ENCODE measurements at regions of chr13 and their contacts with region 1.

Region 1: DNA sequence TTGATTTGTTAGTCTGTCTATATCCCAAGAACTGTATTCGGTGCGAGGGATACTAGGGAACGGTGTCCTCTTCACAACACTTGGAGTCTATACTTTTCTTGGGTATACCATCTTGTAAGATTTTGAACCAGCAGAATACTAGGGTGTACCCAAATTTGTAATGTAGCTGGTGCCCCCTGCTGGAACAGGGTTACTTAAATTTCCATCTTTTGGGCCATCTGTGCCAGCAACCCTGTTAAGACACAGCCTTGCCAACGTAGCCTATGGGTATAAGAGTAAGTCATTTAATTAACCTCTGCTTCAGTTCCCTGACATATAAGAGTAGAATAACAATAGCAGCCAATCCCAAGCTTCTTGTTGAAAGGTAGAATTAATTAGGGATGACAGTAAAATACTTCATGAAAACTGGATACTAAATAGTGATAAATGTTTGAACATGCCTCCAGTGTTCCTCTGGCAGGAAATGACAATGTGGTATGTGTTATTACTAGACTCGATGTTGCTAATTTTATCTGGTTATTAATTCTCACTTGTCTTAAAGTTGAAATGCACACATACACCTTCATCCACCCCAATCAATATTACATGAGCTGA is 607.6 kb downstream of the FGF9 start:
- DNase-seq: peak; percentile 12 to 78 (median 64)
- ATAC-seq: peak in 2 of 4 experiments; percentile 69 to 76
- H3K4me3 ChIP-seq: no peak overlapping the region
- H3K4me3 Mint-ChIP-seq: no peak overlapping the region
- H3K27ac ChIP-seq: no peak overlapping the region
- H3K27ac Mint-ChIP-seq: no peak overlapping the region
- H3K4me1 ChIP-seq: no peaks in the 10 kb centered on the region
- H3K4me1 Mint-ChIP-seq: peaks cover 18 to 21% (median 19%) of the 10 kb centered on the region in 3 donors
- H3K27me3 ChIP-seq: no peaks in the 10 kb centered on the region
- H3K27me3 Mint-ChIP-seq: no peaks in the 10 kb centered on the region

Region 2: DNA sequence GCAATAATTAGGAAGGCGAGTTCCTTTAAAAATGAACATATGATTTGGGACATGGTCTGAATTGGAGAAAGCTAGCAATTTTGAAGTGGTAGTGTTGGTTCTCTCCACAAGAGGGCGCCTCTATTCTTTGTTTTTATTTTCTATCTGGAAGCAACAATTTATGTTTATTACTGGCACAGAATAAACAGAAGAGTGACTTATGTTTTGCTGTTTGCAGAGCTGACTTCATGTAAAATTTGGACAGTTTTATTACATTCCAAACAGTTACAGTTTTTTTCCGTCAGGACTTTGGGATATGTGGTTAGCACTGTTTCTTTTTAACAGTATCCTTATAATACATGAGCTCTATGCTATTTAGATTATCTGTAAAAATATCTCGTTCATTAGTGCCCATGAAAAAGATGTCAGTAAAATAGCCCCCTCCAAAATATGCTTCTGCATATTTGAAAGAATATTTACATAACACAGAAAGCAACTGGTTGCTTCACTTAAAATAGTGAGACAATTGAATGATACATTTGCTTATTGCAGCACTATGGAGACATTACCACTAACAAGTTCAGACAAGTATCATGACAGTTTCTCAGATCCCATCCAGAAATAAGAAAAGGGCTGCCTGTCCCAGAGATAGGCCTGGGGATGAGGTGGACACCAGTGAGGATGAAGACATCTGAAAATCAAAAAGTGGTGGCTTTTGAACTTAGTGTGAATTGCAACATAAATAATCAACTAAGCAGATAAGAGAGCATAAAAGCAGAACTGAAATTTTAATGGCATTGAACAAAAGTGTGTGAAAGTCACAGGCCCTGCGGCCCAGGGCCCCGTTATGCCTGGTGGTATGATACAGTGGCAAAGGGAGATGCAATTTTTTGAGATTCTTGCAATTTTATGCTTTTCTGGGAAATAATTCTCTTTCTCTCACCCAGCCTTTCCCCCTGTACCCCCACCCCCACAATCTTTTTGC is 639.8 kb before region 1 on chr13:
- CTCF ChIA-PET with region 1: interaction called, 10 to 14 read pairs
- POLR2A ChIA-PET with region 1: no interaction called
- DNase-seq: peak in 17 of 35 experiments; percentile 8 to 66 (median 16)
- ATAC-seq: no peak
- H3K4me3 ChIP-seq: no peak overlapping the region
- H3K4me3 Mint-ChIP-seq: no peak overlapping the region
- H3K27ac ChIP-seq: no peak overlapping the region
- H3K27ac Mint-ChIP-seq: no peak overlapping the region
- H3K4me1 ChIP-seq: peaks cover 0 to 3% of the 10 kb centered on the region in 2 experiments
- H3K4me1 Mint-ChIP-seq: peaks cover 0 to 4% (median 2%) of the 10 kb centered on the region in 3 donors
- H3K27me3 ChIP-seq: peaks cover 0 to 14% of the 10 kb centered on the region in 2 experiments
- H3K27me3 Mint-ChIP-seq: peaks cover 5 to 12% of the 10 kb centered on the region in 2 donors

Measured in T-cell (primary cell).